Left colon (tissue), 2 donors: ENCODE measurements at regions of chr5 and their contacts with region 1.

Region 1: GRCh38 chr5:158695595-158696330 is 404.0 kb downstream of the EBF1 start:
- DNase-seq: peak; percentile 36 to 72
- ATAC-seq: peak; percentile 70

Region 2: GRCh38 chr5:158174918-158175851 is 520.6 kb before region 1 on chr5:
- intact Hi-C with region 1: loop called (anchors 2 to 10 kb)
- DNase-seq: peak; percentile 55 to 84
- ATAC-seq: peak; percentile 54

Region 3: DNA sequence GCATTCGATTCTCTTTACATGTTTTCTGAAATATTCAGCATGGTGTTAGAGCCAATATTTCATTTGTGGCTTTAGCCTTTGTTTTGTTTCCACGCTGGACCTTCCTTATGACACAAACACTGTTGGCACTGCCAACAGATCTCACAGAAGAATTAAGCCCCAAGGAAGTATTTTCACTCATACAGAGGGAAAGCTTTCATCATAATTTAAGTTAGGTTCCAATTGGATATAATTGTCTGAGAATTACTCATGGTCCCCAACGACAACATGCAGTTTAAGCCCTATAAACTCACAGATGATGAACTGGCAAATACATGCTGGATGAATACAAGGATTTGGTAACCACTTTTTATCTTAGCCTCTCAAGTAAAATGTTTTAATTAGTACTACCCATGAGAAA is 144.4 kb after region 1 on chr5:
- intact Hi-C with region 1: no loop called
- DNase-seq: no peak
- ATAC-seq: no peak

Region 4: GRCh38 chr5:159100025-159100781 is 404.4 kb after region 1 on chr5:
- intact Hi-C with region 1: loop called in 1 of 2 experiments (anchors 5 kb)
- DNase-seq: peak; percentile 75 to 86
- ATAC-seq: peak; percentile 95

Region 5: GRCh38 chr5:159106569-159107282 is 411.0 kb after region 1 on chr5:
- intact Hi-C with region 1: loop called (anchors 2 to 5 kb)
- DNase-seq: peak in 1 of 2 donors; percentile 85
- ATAC-seq: peak; percentile 82